Activated T-helper 1 cell treated with anti-CD3 and anti-CD28 coated beads, Interleukin-12 subunit alpha, Interleukin-12 subunit beta, Interleukin-2, Interleukin-4 antibody, amounts not matched to agents 30 ng/mL and 10 ng/mL and 1 ng/mL, durations not matched to agents 14 hours and 24 hours and 36 hours (primary cell): ENCODE measurements at regions of chr6 and their contacts with region 1.

Region 1: GRCh38 chr6:34656378-34657036 is 40.1 kb downstream of the ILRUN start:
- DNase-seq: no peak
- H3K4me3 Mint-ChIP-seq: peak overlapping the region; percentile 79
- H3K27ac Mint-ChIP-seq: peak overlapping the region; percentile 97
- H3K4me1 Mint-ChIP-seq: peaks cover 41% of the 10 kb centered on the region
- H3K27me3 Mint-ChIP-seq: no peaks in the 10 kb centered on the region

Region 2: GRCh38 chr6:34602318-34603111 is 54.0 kb before region 1 on chr6:
- intact Hi-C with region 1: no loop called
- DNase-seq: no peak
- H3K4me3 Mint-ChIP-seq: no peak overlapping the region
- H3K27ac Mint-ChIP-seq: no peak overlapping the region
- H3K4me1 Mint-ChIP-seq: peaks cover 14% of the 10 kb centered on the region
- H3K27me3 Mint-ChIP-seq: no peaks in the 10 kb centered on the region

Region 3: GRCh38 chr6:34638834-34639736 is 17.4 kb before region 1 on chr6:
- intact Hi-C with region 1: loop called (anchors 2 kb)
- DNase-seq: no peak
- H3K4me3 Mint-ChIP-seq: no peak overlapping the region
- H3K27ac Mint-ChIP-seq: no peak overlapping the region
- H3K4me1 Mint-ChIP-seq: peaks cover 11% of the 10 kb centered on the region
- H3K27me3 Mint-ChIP-seq: no peaks in the 10 kb centered on the region

Region 4: DNA sequence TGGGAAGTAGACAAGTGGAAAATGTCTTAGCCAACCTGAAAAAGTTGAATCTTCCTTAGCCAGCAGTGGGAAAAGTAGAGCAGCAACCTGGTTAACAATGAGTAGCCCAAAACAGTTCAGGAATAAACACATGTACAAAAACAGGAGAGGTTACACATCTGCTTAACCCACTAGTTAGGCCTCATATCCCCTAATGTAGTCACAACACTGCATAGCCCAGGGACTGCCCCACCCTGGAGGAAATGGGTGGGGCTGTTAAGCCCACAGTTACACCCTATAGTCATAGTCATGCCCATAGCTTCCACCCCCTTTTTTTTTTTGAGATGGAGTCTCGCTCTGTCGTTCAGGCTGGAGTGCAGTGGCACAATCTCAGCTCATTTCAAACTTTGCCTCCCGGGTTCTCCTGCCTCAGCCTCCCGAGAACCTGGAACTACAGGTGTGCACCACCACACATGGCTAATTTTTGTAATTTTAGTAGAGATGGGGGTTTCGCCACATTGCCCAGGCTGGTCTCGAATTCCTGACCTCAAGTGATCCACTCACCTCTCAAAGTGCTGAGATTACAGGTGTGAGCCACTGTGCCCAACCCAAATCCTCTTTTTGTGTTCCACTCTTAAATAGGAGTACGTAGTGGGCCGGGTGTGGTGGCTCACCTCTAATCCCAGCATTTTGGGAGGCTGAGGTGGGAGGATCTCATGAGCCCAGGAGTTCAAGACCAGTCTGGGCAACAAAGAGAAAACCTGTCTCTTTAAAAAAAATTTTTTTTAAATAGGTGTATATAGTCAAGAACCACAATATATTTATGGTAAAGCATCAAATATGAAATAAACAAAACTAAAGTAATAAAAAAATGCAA is 15.5 kb after region 1 on chr6:
- intact Hi-C with region 1: loop called (anchors 1 kb)
- DNase-seq: peak; percentile 80
- H3K4me3 Mint-ChIP-seq: peak overlapping the region; percentile 69
- H3K27ac Mint-ChIP-seq: peak overlapping the region; percentile 97
- H3K4me1 Mint-ChIP-seq: peaks cover 63% of the 10 kb centered on the region
- H3K27me3 Mint-ChIP-seq: no peaks in the 10 kb centered on the region

Region 5: GRCh38 chr6:34696739-34697543 is 40.4 kb after region 1 on chr6 and contains the start of gene ILRUN:
- intact Hi-C with region 1: loop called (anchors 1 kb)
- DNase-seq: peak; percentile 93
- H3K4me3 Mint-ChIP-seq: peak within 1 kb of the TSS; percentile 92
- H3K27ac Mint-ChIP-seq: peak within 1 kb of the TSS; percentile 98
- H3K4me1 Mint-ChIP-seq: peaks cover 39% of the 10 kb centered on the region
- H3K27me3 Mint-ChIP-seq: peaks cover 4% of the 10 kb centered on the region
- total RNA-seq, gene ILRUN: 62.7 and 64.4 TPM in 2 replicates

Region 6: GRCh38 chr6:34791701-34792235 is 135.3 kb after region 1 on chr6 and contains the start of gene BLTP3A:
- intact Hi-C with region 1: loop called (anchors 1 kb)
- DNase-seq: peak; percentile 76
- H3K4me3 Mint-ChIP-seq: peak within 1 kb of the TSS; percentile 99
- H3K27ac Mint-ChIP-seq: peak within 1 kb of the TSS; percentile 97
- H3K4me1 Mint-ChIP-seq: peaks cover 29% of the 10 kb centered on the region
- H3K27me3 Mint-ChIP-seq: no peaks in the 10 kb centered on the region
- total RNA-seq, gene BLTP3A: 17.2 and 17.8 TPM in 2 replicates